ENCODE measurements at regions of chrX and their contacts with region 1.

Region 1: DNA sequence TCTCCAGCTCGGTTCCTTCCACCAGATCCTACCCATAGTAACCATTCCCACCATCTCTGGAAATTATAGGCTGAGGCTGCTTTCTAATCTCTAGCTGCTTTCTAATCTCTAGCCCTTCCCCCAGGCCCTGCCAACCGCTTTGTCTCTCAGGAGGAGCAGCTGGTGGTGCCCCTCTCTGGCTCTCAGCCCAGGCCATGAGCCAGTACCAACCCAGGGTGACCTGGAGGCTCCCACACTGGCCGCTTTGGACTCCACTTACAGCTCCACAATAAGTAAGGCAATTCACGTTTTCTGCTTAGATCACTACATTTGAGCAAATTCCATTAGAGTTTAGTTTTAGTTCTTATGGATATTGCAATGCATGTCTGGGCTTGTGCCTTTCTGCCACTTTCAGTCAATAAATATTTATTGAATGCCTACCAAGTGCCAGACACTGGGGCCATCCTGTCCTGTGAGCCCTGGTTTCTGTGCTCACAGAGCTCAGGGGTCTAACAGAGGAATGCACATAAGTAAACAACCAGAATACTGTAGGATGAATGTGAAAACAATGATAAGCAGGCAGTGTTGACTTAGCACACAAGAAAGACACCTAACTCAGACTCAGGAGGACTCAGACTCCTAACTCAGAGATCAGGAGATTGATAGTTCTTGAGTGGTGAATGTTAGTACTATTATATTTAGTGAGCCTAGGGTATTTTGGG is 38.9 kb downstream of the SMC1A start:
- DNase-seq: no peak
- ATAC-seq: peak; percentile 65
- H3K4me3 ChIP-seq: no peak overlapping the region
- H3K27ac ChIP-seq: peak overlapping the region; percentile 68; the same call in 1 of the 2 replicates
- H3K4me1 ChIP-seq: peaks cover 6% of the 10 kb centered on the region; the same call in 1 of the 2 replicates
- H3K27me3 ChIP-seq: no peaks in the 10 kb centered on the region; the same call in 1 of the 2 replicates
- CTCF ChIP-seq: no peak
- POLR2A ChIP-seq: no peak
- RAD21 ChIP-seq: no peak

Region 2: GRCh38 chrX:53412446-53412845 is 28.9 kb after region 1 on chrX:
- CTCF ChIA-PET with region 1: no interaction called
- POLR2A ChIA-PET with region 1: no interaction called
- dilution Hi-C with region 1: no loop called
- in situ Hi-C with region 1: no loop called
- intact Hi-C with region 1: no loop called
- DNase-seq: no peak
- ATAC-seq: no peak
- H3K4me3 ChIP-seq: no peak overlapping the region
- H3K27ac ChIP-seq: no peak overlapping the region
- H3K4me1 ChIP-seq: no peaks in the 10 kb centered on the region
- H3K27me3 ChIP-seq: no peaks in the 10 kb centered on the region; the same call in 1 of the 2 replicates
- CTCF ChIP-seq: no peak
- POLR2A ChIP-seq: no peak
- RAD21 ChIP-seq: no peak

Region 3: GRCh38 chrX:53441531-53442321 is 58.2 kb after region 1 on chrX:
- CTCF ChIA-PET with region 1: no interaction called
- POLR2A ChIA-PET with region 1: no interaction called
- dilution Hi-C with region 1: no loop called
- in situ Hi-C with region 1: loop called (anchors 10 kb)
- intact Hi-C with region 1: no loop called
- DNase-seq: peak; percentile 49
- ATAC-seq: peak; percentile 60
- H3K4me3 ChIP-seq: peak overlapping the region; percentile 37
- H3K27ac ChIP-seq: peak overlapping the region; percentile 48
- H3K4me1 ChIP-seq: peaks cover 4% of the 10 kb centered on the region; the same call in 1 of the 2 replicates
- H3K27me3 ChIP-seq: peaks cover 18% of the 10 kb centered on the region
- CTCF ChIP-seq: no peak
- POLR2A ChIP-seq: no peak
- RAD21 ChIP-seq: no peak